Caco-2 (cell line): ENCODE measurements at regions of chr1 and their contacts with region 1.

Region 1: DNA sequence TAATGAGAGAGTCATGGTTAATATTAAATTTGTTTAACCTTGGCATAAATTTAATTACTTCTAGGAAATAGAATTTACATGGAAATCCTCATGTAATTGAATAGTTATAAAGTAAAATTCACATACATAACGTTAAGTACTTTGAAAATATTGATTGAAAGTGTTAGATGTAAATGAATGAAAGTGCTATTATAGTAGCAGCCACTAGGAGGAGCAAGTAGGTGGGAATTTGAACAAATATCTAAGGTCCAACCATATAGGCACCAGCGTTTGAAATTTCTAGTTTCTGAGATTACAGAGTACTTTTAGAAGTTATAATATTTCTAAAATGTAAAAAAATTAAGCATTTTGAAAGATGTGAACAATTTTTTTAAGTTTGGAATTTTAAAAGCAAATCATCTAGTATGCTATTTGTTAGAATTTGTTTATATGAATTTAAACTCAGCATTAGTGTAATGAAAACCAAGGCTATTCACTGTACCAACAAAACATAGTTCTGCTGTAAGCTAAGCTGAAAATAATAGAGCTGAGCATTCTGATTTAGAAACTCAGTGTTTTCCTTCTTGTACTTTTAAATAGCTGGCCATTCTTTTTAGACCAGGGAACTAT is 3.3 kb downstream of the B3GALT2 start:
- DNase-seq: peak in 1 of 2 experiments; percentile 36
- H3K4me3 ChIP-seq: no peak overlapping the region
- H3K4me3 Mint-ChIP-seq: no peak overlapping the region
- H3K27ac Mint-ChIP-seq: no peak overlapping the region
- H3K4me1 ChIP-seq: peaks cover 19% of the 10 kb centered on the region
- H3K4me1 Mint-ChIP-seq: peaks cover 18% of the 10 kb centered on the region
- H3K27me3 ChIP-seq: no peaks in the 10 kb centered on the region
- H3K27me3 Mint-ChIP-seq: no peaks in the 10 kb centered on the region
- CTCF ChIP-seq: peak; percentile 59 to 79

Region 2: GRCh38 chr1:193211539-193211938 is 28.4 kb after region 1 on chr1:
- CTCF ChIA-PET with region 1: no interaction called
- POLR2A ChIA-PET with region 1: no interaction called
- intact Hi-C with region 1: loop called (anchors 1 kb)
- DNase-seq: peak; percentile 53 to 54
- H3K4me3 ChIP-seq: no peak overlapping the region
- H3K4me3 Mint-ChIP-seq: no peak overlapping the region
- H3K27ac Mint-ChIP-seq: peak overlapping the region; percentile 70
- H3K4me1 ChIP-seq: peaks cover 37% of the 10 kb centered on the region
- H3K4me1 Mint-ChIP-seq: peaks cover 7% of the 10 kb centered on the region
- H3K27me3 ChIP-seq: no peaks in the 10 kb centered on the region
- H3K27me3 Mint-ChIP-seq: no peaks in the 10 kb centered on the region
- CTCF ChIP-seq: no peak

Region 3: GRCh38 chr1:193237381-193237978 is 54.4 kb after region 1 on chr1:
- CTCF ChIA-PET with region 1: no interaction called
- POLR2A ChIA-PET with region 1: no interaction called
- intact Hi-C with region 1: loop called (anchors 1 kb)
- DNase-seq: peak; percentile 30 to 64
- H3K4me3 ChIP-seq: no peak overlapping the region
- H3K4me3 Mint-ChIP-seq: no peak overlapping the region
- H3K27ac Mint-ChIP-seq: no peak overlapping the region
- H3K4me1 ChIP-seq: peaks cover 7% of the 10 kb centered on the region
- H3K4me1 Mint-ChIP-seq: peaks cover 13% of the 10 kb centered on the region
- H3K27me3 ChIP-seq: no peaks in the 10 kb centered on the region
- H3K27me3 Mint-ChIP-seq: no peaks in the 10 kb centered on the region
- CTCF ChIP-seq: no peak

Region 4: DNA sequence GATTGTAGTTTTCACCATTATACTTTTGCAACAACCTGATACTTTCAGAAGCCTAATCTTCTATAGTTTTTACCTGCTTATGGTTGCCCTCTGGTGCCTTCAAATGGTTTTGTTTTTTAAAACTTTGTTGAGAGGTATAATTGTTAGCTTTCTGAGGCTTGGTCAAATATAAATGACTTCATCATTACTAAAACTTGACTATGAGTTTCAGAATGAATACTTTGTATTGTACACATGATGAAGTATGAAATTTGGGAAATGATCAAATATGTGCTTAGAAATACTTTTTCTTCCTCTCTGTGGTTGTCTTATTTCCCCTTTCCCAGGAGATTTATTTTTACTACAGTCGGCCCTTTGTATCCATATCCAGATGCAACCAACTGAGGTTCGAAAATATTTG is 155.1 kb after region 1 on chr1:
- CTCF ChIA-PET with region 1: no interaction called
- POLR2A ChIA-PET with region 1: no interaction called
- intact Hi-C with region 1: loop called (anchors 1 kb)
- DNase-seq: no peak
- H3K4me3 ChIP-seq: no peak overlapping the region
- H3K4me3 Mint-ChIP-seq: no peak overlapping the region
- H3K27ac Mint-ChIP-seq: no peak overlapping the region
- H3K4me1 ChIP-seq: peaks cover 28% of the 10 kb centered on the region
- H3K4me1 Mint-ChIP-seq: peaks cover 6% of the 10 kb centered on the region
- H3K27me3 ChIP-seq: no peaks in the 10 kb centered on the region
- H3K27me3 Mint-ChIP-seq: no peaks in the 10 kb centered on the region
- CTCF ChIP-seq: peak; percentile 9 to 18

Region 5: GRCh38 chr1:193388683-193389082 is 205.6 kb after region 1 on chr1:
- CTCF ChIA-PET with region 1: no interaction called
- POLR2A ChIA-PET with region 1: no interaction called
- intact Hi-C with region 1: loop called (anchors 2 kb)
- DNase-seq: no peak
- H3K4me3 ChIP-seq: no peak overlapping the region
- H3K4me3 Mint-ChIP-seq: no peak overlapping the region
- H3K27ac Mint-ChIP-seq: no peak overlapping the region
- H3K4me1 ChIP-seq: no peaks in the 10 kb centered on the region
- H3K4me1 Mint-ChIP-seq: no peaks in the 10 kb centered on the region
- H3K27me3 ChIP-seq: no peaks in the 10 kb centered on the region
- H3K27me3 Mint-ChIP-seq: no peaks in the 10 kb centered on the region
- CTCF ChIP-seq: no peak

Region 6: DNA sequence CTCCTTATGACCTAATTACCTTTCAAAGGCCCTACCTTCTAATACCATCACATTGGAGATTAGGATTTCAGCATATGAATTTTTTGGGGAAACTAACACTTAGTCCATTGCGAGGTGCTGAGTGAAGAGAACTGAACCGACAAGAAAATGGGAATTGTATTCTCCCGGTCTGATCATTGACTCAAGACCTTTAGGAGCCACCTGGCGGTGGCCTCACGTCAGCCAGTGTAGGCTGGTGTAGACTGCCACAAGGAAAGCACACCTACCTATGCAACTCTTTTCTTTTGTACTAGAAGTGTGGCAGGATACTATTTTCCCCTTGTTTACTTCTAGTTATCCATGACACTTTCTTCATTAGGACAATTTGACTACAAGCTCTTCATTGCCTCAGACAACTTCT is 336.8 kb after region 1 on chr1:
- CTCF ChIA-PET with region 1: no interaction called
- POLR2A ChIA-PET with region 1: no interaction called
- intact Hi-C with region 1: loop called (anchors 2 kb)
- DNase-seq: peak in 1 of 2 experiments; percentile 33
- H3K4me3 ChIP-seq: no peak overlapping the region
- H3K4me3 Mint-ChIP-seq: no peak overlapping the region
- H3K27ac Mint-ChIP-seq: no peak overlapping the region
- H3K4me1 ChIP-seq: no peaks in the 10 kb centered on the region
- H3K4me1 Mint-ChIP-seq: peaks cover 4% of the 10 kb centered on the region
- H3K27me3 ChIP-seq: no peaks in the 10 kb centered on the region
- H3K27me3 Mint-ChIP-seq: no peaks in the 10 kb centered on the region
- CTCF ChIP-seq: peak; percentile 22 to 36

Region 7: DNA sequence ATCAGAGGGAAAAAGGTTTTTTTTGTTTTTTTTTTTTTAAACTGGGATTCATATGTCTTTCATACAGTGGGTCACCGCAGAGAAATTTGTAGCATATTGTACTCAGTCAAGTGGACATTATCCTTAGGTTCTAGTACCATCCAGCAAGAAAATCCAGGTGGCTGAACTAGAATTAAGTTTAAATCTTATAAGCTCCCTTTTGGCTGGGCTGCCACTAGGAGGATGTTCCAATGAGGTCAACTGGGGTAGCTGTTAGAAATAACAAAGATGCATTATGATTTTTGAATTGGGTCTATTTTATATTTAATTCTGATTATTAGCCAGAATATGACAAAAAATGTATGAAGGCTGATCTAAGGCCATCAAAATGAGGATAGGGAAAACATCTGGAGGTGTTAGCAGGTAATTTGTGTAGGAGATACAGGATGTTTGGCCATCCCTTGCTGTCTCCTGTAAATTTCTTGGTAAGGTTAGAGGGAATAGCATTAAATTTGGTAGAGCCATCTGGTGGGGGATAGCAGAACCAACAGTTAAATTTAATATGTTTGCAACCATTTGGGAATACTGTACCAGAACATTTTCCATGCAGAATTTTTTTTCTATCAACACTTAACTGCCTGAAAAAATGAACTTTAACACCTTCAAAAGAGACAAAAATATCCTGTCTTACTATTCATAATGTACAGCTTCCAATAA is 571.8 kb after region 1 on chr1:
- CTCF ChIA-PET with region 1: no interaction called
- POLR2A ChIA-PET with region 1: no interaction called
- intact Hi-C with region 1: loop called (anchors 1 kb)
- DNase-seq: no peak
- H3K4me3 ChIP-seq: no peak overlapping the region
- H3K4me3 Mint-ChIP-seq: no peak overlapping the region
- H3K27ac Mint-ChIP-seq: no peak overlapping the region
- H3K4me1 ChIP-seq: no peaks in the 10 kb centered on the region
- H3K4me1 Mint-ChIP-seq: no peaks in the 10 kb centered on the region
- H3K27me3 ChIP-seq: no peaks in the 10 kb centered on the region
- H3K27me3 Mint-ChIP-seq: no peaks in the 10 kb centered on the region
- CTCF ChIP-seq: peak; percentile 16 to 19